IMR-90 (cell line): ENCODE measurements at regions of chr3 and their contacts with region 1.

Region 1: GRCh38 chr3:181694805-181695660 is 16.7 kb upstream of the SOX2 start:
- DNase-seq: no peak
- ATAC-seq: peak; percentile 11; the same call in 1 of the 2 replicates
- H3K4me3 ChIP-seq: no peak overlapping the region
- H3K27ac ChIP-seq: no peak overlapping the region
- H3K4me1 ChIP-seq: no peaks in the 10 kb centered on the region
- H3K27me3 ChIP-seq: peaks cover 24% of the 10 kb centered on the region
- CTCF ChIP-seq: no peak
- POLR2A ChIP-seq: no peak
- RAD21 ChIP-seq: no peak

Region 2: GRCh38 chr3:181210275-181210674 is 484.8 kb before region 1 on chr3:
- CTCF ChIA-PET with region 1: interaction called, 3 read pairs
- POLR2A ChIA-PET with region 1: no interaction called
- dilution Hi-C with region 1: no loop called
- in situ Hi-C with region 1: loop called (anchors 25 kb)
- intact Hi-C with region 1: no loop called
- DNase-seq: peak; percentile 15
- ATAC-seq: no peak
- H3K4me3 ChIP-seq: no peak overlapping the region
- H3K27ac ChIP-seq: no peak overlapping the region
- H3K4me1 ChIP-seq: no peaks in the 10 kb centered on the region
- H3K27me3 ChIP-seq: no peaks in the 10 kb centered on the region
- CTCF ChIP-seq: 0 out of 2 replicates have a peak, but pooled peaks have one; percentile 30
- POLR2A ChIP-seq: no peak
- RAD21 ChIP-seq: peak; percentile 18; the same call in 1 of the 2 replicates